Activated B cell treated with CpG ODN at 0.5 μM for 24 hours (primary cell): ENCODE measurements at regions of chr6 and their contacts with region 1.

Region 1: DNA sequence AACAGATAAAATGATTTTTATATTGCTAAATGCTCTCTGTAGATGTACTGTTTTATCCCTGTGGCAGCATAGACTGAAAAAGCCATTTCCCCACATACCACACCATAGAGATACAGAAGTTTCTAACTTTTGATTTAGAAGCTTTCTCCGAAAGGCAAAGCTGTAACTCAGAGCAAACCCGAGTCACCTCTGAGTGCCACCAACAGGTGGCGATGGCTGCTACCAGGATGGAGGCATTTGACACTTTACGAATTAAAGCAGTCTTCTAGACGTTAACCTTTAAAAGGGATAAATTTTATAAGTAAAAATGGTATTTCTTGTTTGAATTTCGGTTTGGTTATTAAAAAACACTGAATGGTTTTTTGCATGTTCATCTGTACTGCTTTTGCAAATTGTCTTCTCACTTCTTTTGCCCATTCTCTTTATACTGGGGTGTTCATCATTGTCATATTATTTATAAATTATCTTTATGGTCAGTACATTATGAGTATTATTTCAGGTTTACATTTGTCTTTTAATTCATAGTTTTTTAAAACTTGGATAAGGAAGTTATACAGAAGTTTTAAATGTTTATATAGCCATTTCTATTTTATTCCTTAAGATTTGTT is 201.0 kb upstream of the CEP162 start:
- DNase-seq: no peak
- ATAC-seq: no peak
- H3K4me3 Mint-ChIP-seq: no peak overlapping the region
- H3K27ac Mint-ChIP-seq: no peak overlapping the region
- H3K4me1 Mint-ChIP-seq: no peaks in the 10 kb centered on the region
- H3K27me3 Mint-ChIP-seq: no peaks in the 10 kb centered on the region
- CTCF ChIP-seq: no peak

Region 2: GRCh38 chr6:84269947-84270733 is 158.3 kb before region 1 on chr6:
- CTCF ChIA-PET with region 1: no interaction called
- POLR2A ChIA-PET with region 1: no interaction called
- intact Hi-C with region 1: no loop called
- DNase-seq: no peak
- ATAC-seq: no peak
- H3K4me3 Mint-ChIP-seq: no peak overlapping the region
- H3K27ac Mint-ChIP-seq: no peak overlapping the region
- H3K4me1 Mint-ChIP-seq: no peaks in the 10 kb centered on the region
- H3K27me3 Mint-ChIP-seq: peaks cover 7% of the 10 kb centered on the region
- CTCF ChIP-seq: no peak

Region 3: DNA sequence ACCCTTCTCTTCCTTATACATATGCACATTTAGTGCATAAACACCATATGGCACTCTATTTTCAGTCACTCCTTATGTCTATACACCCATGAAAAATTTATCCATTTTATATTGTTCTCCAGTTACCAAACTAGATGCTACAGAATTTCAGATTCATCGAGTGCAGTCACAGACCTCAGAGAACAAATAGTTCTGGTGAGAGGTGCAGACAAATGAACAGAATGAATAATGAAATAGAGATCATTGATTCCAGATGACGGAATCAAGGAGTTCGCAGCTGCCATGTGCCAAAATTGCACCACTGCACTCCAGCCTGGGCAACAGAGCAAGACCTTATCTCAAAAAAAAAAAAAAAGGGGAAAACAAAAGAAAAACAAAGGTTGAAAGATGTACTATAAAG is 13.8 kb after region 1 on chr6:
- CTCF ChIA-PET with region 1: no interaction called
- POLR2A ChIA-PET with region 1: no interaction called
- intact Hi-C with region 1: no loop called
- DNase-seq: no peak
- ATAC-seq: no peak
- H3K4me3 Mint-ChIP-seq: no peak overlapping the region
- H3K27ac Mint-ChIP-seq: no peak overlapping the region
- H3K4me1 Mint-ChIP-seq: no peaks in the 10 kb centered on the region
- H3K27me3 Mint-ChIP-seq: no peaks in the 10 kb centered on the region
- CTCF ChIP-seq: no peak

Region 4: GRCh38 chr6:84466511-84466910 is 38.1 kb after region 1 on chr6:
- CTCF ChIA-PET with region 1: no interaction called
- POLR2A ChIA-PET with region 1: no interaction called
- intact Hi-C with region 1: no loop called
- DNase-seq: no peak
- ATAC-seq: no peak
- H3K4me3 Mint-ChIP-seq: no peak overlapping the region
- H3K27ac Mint-ChIP-seq: no peak overlapping the region
- H3K4me1 Mint-ChIP-seq: no peaks in the 10 kb centered on the region
- H3K27me3 Mint-ChIP-seq: no peaks in the 10 kb centered on the region
- CTCF ChIP-seq: no peak

Region 5: DNA sequence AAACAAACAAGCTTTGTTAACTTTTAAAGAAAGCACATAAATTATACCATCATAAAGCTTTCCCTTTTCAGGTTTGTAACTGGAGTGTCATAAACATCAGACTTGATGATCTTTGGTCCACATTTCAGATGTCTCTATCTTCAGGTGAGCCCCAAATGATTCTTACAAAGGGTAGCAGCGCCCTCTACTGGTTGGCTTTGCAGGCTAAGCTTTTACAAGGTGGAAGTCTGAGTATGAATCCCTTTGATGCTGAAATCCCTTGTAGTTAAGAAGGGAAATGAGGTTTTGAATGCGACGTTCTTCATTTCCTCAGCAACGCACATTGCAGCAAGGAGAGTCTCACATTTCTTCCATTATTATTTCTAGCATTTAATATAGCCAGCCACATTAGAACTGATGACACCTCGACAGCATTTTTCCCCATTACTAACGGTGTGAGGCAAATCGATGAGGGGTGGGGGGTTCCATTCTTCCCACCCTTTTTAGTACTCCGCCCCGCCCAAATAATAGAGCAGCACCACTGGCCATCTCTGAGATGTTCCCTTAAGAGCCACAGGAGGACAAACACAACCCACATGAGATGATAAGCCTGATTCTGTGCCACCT is 895.1 kb after region 1 on chr6:
- CTCF ChIA-PET with region 1: no interaction called
- POLR2A ChIA-PET with region 1: no interaction called
- intact Hi-C with region 1: loop called (anchors 5 kb)
- DNase-seq: peak; percentile 20
- ATAC-seq: no peak
- H3K4me3 Mint-ChIP-seq: no peak overlapping the region
- H3K27ac Mint-ChIP-seq: no peak overlapping the region
- H3K4me1 Mint-ChIP-seq: no peaks in the 10 kb centered on the region
- H3K27me3 Mint-ChIP-seq: peaks cover 9% of the 10 kb centered on the region
- CTCF ChIP-seq: no peak